ENCODE measurements at regions of chr10 and their contacts with region 1.

Region 1: GRCh38 chr10:5889624-5890451 is at the starts of genes ANKRD16 and FBH1:
- DNase-seq: peak; percentile 99 to 100 (median 99)
- ATAC-seq: peak; percentile 94 to 97 (median 94)
- H3K4me3 ChIP-seq: peak within 1 kb of the TSS; percentile 62 to 99 (median 84)
- H3K27ac ChIP-seq: peak within 1 kb of the TSS; percentile 76 to 92 (median 87)
- H3K4me1 ChIP-seq: peaks cover 0 to 68% (median 53%) of the 10 kb centered on the region in 12 donors
- H3K27me3 ChIP-seq: no peaks in the 10 kb centered on the region
- CTCF ChIP-seq: peak in 1 of 12 donors; percentile 6
- POLR2A ChIP-seq: peak; percentile 67 to 81
- total RNA-seq, gene ANKRD16: 1.7 to 5.0 (median 2.9) TPM
- total RNA-seq, gene FBH1: 57.4 to 111 (median 83.5) TPM

Region 2: GRCh38 chr10:5502903-5503835 is 386.7 kb before region 1 on chr10:
- intact Hi-C with region 1: no loop called
- DNase-seq: no peak
- ATAC-seq: no peak
- H3K4me3 ChIP-seq: no peak overlapping the region
- H3K27ac ChIP-seq: no peak overlapping the region
- H3K4me1 ChIP-seq: no peaks in the 10 kb centered on the region
- H3K27me3 ChIP-seq: no peaks in the 10 kb centered on the region
- CTCF ChIP-seq: no peak
- POLR2A ChIP-seq: no peak

Region 3: GRCh38 chr10:5983774-5984173 is 93.9 kb after region 1 on chr10:
- intact Hi-C with region 1: loop called in 1 of 10 experiments (anchors 5 kb)
- DNase-seq: no peak
- ATAC-seq: peak in 1 of 4 donors; percentile 27
- H3K4me3 ChIP-seq: no peak overlapping the region
- H3K27ac ChIP-seq: peak overlapping the region in 1 of 12 donors; percentile 16
- H3K4me1 ChIP-seq: peaks cover 0 to 10% (median 0%) of the 10 kb centered on the region in 12 donors
- H3K27me3 ChIP-seq: no peaks in the 10 kb centered on the region
- CTCF ChIP-seq: no peak
- POLR2A ChIP-seq: no peak